H1 (cell line): ENCODE measurements at regions of chr1 and their contacts with region 1.

Region 1: DNA sequence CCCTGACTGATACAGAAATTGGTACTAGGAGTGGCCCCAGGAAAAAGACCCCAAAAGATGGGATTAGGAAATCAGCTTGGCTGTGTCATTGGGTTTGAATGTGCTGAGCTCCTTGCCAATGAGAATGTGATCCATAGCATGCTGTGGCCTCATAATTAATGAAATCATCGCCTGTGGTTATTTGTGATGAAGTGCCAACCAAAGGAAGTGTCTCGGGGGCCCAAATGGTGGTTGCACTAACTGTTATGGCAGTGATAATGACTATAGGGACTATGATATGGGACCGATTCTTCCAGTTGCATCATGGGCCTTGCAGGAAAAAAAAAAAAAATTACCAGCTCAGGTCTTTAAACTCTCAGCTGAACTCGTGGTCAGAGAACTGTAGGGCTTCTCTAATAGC is 15.4 kb upstream of the ZDHHC18 start:
- DNase-seq: no peak
- H3K4me3 ChIP-seq: no peak overlapping the region
- H3K27ac ChIP-seq: no peak overlapping the region
- H3K4me1 ChIP-seq: no peaks in the 10 kb centered on the region
- H3K27me3 ChIP-seq: no peaks in the 10 kb centered on the region
- CTCF ChIP-seq: no peak
- EP300 ChIP-seq: no peak
- POLR2A ChIP-seq: no peak
- RAD21 ChIP-seq: no peak

Region 2: GRCh38 chr1:26761217-26761616 is 49.8 kb before region 1 on chr1:
- CTCF ChIA-PET with region 1: no interaction called
- POLR2A ChIA-PET with region 1: no interaction called
- DNase-seq: no peak
- H3K4me3 ChIP-seq: no peak overlapping the region
- H3K27ac ChIP-seq: no peak overlapping the region
- H3K4me1 ChIP-seq: no peaks in the 10 kb centered on the region
- H3K27me3 ChIP-seq: no peaks in the 10 kb centered on the region
- CTCF ChIP-seq: peak in 2 of 3 experiments; percentile 4 to 26; a peak in 2 of 4 replicates
- EP300 ChIP-seq: no peak
- POLR2A ChIP-seq: no peak
- RAD21 ChIP-seq: no peak; a peak in 1 of 4 replicates

Region 3: DNA sequence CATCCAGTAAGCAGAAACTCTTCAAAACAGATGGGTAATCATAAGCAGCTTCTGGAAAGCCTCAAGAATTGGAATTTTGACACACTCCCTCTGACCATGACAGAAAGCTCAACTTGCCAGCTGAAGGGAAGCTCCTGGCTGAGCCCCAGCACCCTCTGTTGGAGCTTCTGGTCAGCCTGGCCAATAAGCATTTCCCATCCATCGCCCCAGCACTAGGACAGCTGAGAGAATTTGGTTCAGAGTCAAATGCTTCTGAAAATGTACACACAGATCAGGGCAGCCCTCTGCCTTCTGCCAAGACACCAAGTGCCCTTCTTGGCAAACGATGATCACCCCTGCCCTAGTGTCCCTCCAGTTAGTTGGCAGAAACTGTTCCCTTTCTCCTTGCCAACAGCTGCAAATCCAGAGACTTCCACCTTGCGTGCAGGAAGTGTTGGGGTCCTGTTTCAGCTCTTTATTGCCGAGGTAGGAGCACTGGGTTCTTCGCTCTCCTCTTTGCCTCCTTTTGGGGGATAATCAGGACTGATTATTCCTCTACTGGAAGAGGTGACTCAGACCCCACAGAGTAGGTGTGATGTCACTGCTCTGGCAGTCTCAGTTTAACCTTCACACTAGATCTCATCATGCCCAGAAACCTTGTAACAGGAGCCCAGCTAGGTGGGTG is 11.4 kb before region 1 on chr1:
- CTCF ChIA-PET with region 1: interaction called, 13 read pairs
- POLR2A ChIA-PET with region 1: interaction called, 3 read pairs
- DNase-seq: no peak
- H3K4me3 ChIP-seq: no peak overlapping the region
- H3K27ac ChIP-seq: no peak overlapping the region
- H3K4me1 ChIP-seq: peaks cover 3 to 12% (median 5%) of the 10 kb centered on the region in 4 experiments; a peak in 4 of 7 replicates
- H3K27me3 ChIP-seq: no peaks in the 10 kb centered on the region
- CTCF ChIP-seq: no peak
- EP300 ChIP-seq: no peak
- POLR2A ChIP-seq: no peak
- RAD21 ChIP-seq: no peak

Region 4: GRCh38 chr1:26826261-26827105 is 15.4 kb after region 1 on chr1 and contains the start of gene ZDHHC18:
- CTCF ChIA-PET with region 1: interaction called, 21 read pairs
- POLR2A ChIA-PET with region 1: interaction called, 5 read pairs
- DNase-seq: peak in 1 of 2 experiments; percentile 86
- H3K4me3 ChIP-seq: peak within 1 kb of the TSS; percentile 53 to 76 (median 56)
- H3K27ac ChIP-seq: no peak within 1 kb of the TSS
- H3K4me1 ChIP-seq: peaks cover 6 to 9% (median 7%) of the 10 kb centered on the region in 4 experiments; a peak in 6 of 7 replicates
- H3K27me3 ChIP-seq: no peaks in the 10 kb centered on the region
- CTCF ChIP-seq: peak; percentile 55 to 68 (median 65)
- EP300 ChIP-seq: no peak
- POLR2A ChIP-seq: peak in 1 of 2 experiments; percentile 34; a peak in 1 of 3 replicates
- RAD21 ChIP-seq: peak in 1 of 2 experiments; percentile 0; a peak in 2 of 4 replicates
- total RNA-seq, gene ZDHHC18: 29.2 and 29.7 TPM in 2 replicates